Left cardiac atrium (tissue), 4 donors: ENCODE measurements at regions of chr2 and their contacts with region 1.

Region 1: GRCh38 chr2:10832203-10832936 is 19.8 kb upstream of the PDIA6 start:
- DNase-seq: peak; percentile 84
- ATAC-seq: peak; percentile 86

Region 2: DNA sequence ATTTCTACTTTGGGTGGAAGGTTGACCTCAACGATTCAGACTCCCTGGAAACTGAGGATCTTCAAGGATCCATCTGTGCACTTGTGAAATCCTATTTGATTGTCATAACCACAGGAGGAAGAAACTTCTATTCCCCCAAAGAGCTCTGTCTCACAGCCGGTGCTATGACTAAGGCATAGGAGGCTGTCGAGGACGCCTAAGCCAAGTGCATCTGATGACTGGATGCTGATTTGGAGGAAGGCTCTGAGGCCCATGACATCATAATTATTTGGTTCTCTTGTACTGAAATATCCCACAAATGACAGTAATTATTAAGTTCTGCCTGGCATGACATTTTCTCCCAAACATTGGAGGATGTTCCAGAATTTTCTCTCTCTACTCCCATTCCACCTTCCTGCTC is 65.6 kb after region 1 on chr2:
- intact Hi-C with region 1: loop called in 1 of 2 experiments (anchors 5 kb)
- DNase-seq: no peak
- ATAC-seq: peak in 1 of 2 donors; percentile 45